Activated naive CD4-positive, alpha-beta T cell treated with anti-CD3 and anti-CD28 coated beads for 36 hours (primary cell): ENCODE measurements at regions of chr3 and their contacts with region 1.

Region 1: GRCh38 chr3:160343132-160343531 is 55.9 kb downstream of the IFT80 start:
- DNase-seq: no peak
- H3K4me3 Mint-ChIP-seq: no peak overlapping the region
- H3K27ac Mint-ChIP-seq: no peak overlapping the region
- H3K4me1 Mint-ChIP-seq: no peaks in the 10 kb centered on the region
- H3K27me3 Mint-ChIP-seq: no peaks in the 10 kb centered on the region

Region 2: DNA sequence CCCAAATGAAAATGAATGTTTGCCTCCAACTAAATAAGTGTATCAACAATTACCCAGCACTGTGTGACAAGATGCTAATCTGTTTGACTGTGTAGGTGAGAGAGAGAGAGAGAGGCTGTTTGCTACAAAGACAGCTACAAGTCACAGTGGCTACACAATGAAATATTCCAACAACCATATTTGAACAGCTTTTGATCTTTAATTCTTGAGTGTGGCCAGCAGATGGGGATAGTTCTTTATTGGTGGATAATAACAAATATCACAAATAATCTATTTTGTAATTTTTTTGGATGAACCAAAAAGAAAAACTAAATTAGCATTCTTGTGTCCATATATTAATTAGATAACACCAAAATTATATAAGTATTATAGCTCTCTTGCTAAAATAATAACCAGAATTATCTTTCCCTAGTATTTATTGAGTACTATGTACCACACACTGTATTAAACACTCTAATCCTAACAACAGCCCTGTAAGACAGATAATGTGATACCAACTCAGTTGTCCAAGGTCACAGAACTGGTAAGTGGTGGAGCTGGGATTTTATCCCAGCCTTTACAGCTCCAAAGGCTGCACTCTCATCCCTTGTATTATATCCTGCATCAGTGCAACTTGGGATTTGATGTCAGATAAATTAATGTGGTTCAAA is 179.8 kb before region 1 on chr3:
- CTCF ChIA-PET with region 1: no interaction called
- intact Hi-C with region 1: loop called (anchors 1 kb)
- DNase-seq: no peak
- H3K4me3 Mint-ChIP-seq: no peak overlapping the region
- H3K27ac Mint-ChIP-seq: no peak overlapping the region
- H3K4me1 Mint-ChIP-seq: no peaks in the 10 kb centered on the region
- H3K27me3 Mint-ChIP-seq: no peaks in the 10 kb centered on the region